Mammary epithelial cell (primary cell): ENCODE measurements at regions of chr7 and their contacts with region 1.

Region 1: DNA sequence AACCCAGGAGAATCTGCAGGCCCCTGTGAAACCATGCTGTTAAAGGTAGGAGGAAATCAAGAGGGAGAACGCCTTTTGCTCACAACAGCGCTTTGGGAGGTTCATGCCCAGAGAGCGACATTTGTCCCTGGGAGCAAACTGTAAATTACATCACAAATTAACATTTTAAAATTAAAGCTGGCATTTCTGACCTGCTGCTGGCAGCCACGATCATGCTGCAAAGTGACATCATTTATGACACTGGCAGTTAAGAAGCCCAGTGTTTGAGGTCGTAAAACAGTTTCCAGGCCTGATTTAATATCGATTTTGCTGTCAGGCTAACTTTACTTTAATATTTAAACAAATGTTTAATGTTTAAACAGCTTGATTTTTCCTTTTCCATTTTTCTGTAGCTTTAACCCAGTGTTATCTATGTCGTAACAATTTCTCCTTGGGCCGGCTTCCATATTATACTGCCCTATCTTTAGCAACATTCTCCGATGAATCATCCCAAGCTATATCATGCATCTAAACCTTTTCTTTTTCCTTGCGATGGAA is 86.5 kb upstream of the NPVF start:
- DNase-seq: no peak
- H3K4me3 ChIP-seq: no peak overlapping the region
- H3K27ac ChIP-seq: no peak overlapping the region
- H3K4me1 ChIP-seq: peaks cover 2% of the 10 kb centered on the region
- H3K27me3 ChIP-seq: no peaks in the 10 kb centered on the region
- CTCF ChIP-seq: no peak

Region 2: GRCh38 chr7:25359471-25360059 is 44.8 kb after region 1 on chr7:
- CTCF ChIA-PET with region 1: no interaction called
- dilution Hi-C with region 1: loop called (anchors 5 kb)
- in situ Hi-C with region 1: no loop called
- intact Hi-C with region 1: no loop called
- DNase-seq: no peak
- H3K4me3 ChIP-seq: no peak overlapping the region
- H3K27ac ChIP-seq: no peak overlapping the region
- H3K4me1 ChIP-seq: no peaks in the 10 kb centered on the region
- H3K27me3 ChIP-seq: peaks cover 2% of the 10 kb centered on the region
- CTCF ChIP-seq: no peak